B cell (primary cell): ENCODE measurements at regions of chr19 and their contacts with region 1.

Region 1: DNA sequence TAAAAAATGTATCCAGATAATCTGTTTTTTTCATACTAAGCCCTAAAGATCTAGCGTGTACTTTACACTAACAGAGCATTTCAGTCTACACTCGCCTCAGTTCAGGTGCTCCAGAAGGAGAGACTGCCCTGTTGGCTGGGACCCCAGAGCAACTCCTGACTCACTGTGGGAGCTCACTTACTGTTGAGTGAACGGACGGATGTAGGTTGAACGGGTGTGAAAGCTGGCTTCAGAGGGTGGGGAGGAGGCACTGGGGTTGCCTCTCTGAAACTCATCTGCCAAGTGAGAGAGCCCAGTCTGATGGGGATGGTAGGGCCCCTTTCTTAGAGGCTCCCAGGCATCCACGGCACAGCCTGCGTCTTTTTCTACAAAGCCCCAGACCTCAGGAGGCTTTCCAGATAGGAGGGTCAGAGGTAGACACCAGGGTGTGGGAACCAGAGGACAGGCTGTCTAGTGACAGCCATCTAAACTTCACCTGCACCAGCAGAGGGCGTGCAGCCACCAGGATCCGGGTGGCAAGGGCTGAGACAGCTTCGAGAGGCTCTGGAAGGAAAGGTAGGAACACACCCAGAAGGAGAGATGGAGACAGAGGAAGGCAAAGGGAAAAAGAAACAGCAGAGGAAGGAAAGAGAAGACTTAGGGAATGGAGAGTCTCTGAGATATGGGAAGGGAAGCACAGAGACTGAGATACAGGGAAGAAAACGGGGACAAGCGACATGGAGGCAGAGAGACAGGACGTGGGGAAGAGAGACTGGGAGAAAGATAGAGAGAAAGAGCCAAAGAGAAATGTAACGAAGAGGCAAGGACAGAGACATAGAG is 3.7 kb downstream of the KASH5 start:
- DNase-seq: peak; percentile 86
- ATAC-seq: peak; percentile 59
- H3K4me3 ChIP-seq: no peak overlapping the region
- H3K4me3 Mint-ChIP-seq: peak overlapping the region; percentile 44
- H3K27ac ChIP-seq: peak overlapping the region; percentile 61 to 65
- H3K27ac Mint-ChIP-seq: peak overlapping the region; percentile 79
- H3K4me1 ChIP-seq: peaks cover 21 to 46% of the 10 kb centered on the region in 2 donors
- H3K4me1 Mint-ChIP-seq: peaks cover 41% of the 10 kb centered on the region
- H3K27me3 ChIP-seq: no peaks in the 10 kb centered on the region
- H3K27me3 Mint-ChIP-seq: no peaks in the 10 kb centered on the region
- CTCF ChIP-seq: peak; percentile 87

Region 2: GRCh38 chr19:48780631-48781391 is 611.0 kb before region 1 on chr19:
- CTCF ChIA-PET with region 1: no interaction called
- POLR2A ChIA-PET with region 1: no interaction called
- intact Hi-C with region 1: no loop called
- DNase-seq: no peak
- ATAC-seq: no peak
- H3K4me3 ChIP-seq: no peak overlapping the region
- H3K4me3 Mint-ChIP-seq: no peak overlapping the region
- H3K27ac ChIP-seq: no peak overlapping the region
- H3K27ac Mint-ChIP-seq: peak overlapping the region; percentile 5
- H3K4me1 ChIP-seq: peaks cover 3 to 15% of the 10 kb centered on the region in 2 donors
- H3K4me1 Mint-ChIP-seq: peaks cover 19% of the 10 kb centered on the region
- H3K27me3 ChIP-seq: no peaks in the 10 kb centered on the region
- H3K27me3 Mint-ChIP-seq: no peaks in the 10 kb centered on the region
- CTCF ChIP-seq: no peak

Region 3: GRCh38 chr19:49301165-49301865 is 90.5 kb before region 1 on chr19:
- CTCF ChIA-PET with region 1: interaction called, 21 read pairs
- POLR2A ChIA-PET with region 1: no interaction called
- intact Hi-C with region 1: loop called (anchors 2 kb)
- DNase-seq: peak; percentile 89
- ATAC-seq: peak; percentile 98
- H3K4me3 ChIP-seq: peak overlapping the region in 4 of 5 experiments; percentile 11 to 51 (median 37)
- H3K4me3 Mint-ChIP-seq: peak overlapping the region; percentile 66
- H3K27ac ChIP-seq: no peak overlapping the region
- H3K27ac Mint-ChIP-seq: peak overlapping the region; percentile 20
- H3K4me1 ChIP-seq: peaks cover 10 to 14% of the 10 kb centered on the region in 2 donors
- H3K4me1 Mint-ChIP-seq: peaks cover 24% of the 10 kb centered on the region
- H3K27me3 ChIP-seq: no peaks in the 10 kb centered on the region
- H3K27me3 Mint-ChIP-seq: no peaks in the 10 kb centered on the region
- CTCF ChIP-seq: peak; percentile 90

Region 4: GRCh38 chr19:49331616-49332055 is 60.2 kb before region 1 on chr19:
- CTCF ChIA-PET with region 1: interaction called, 23 read pairs
- POLR2A ChIA-PET with region 1: interaction called, 18 read pairs
- intact Hi-C with region 1: loop called (anchors 2 kb)
- DNase-seq: peak; percentile 83
- ATAC-seq: peak; percentile 29
- H3K4me3 ChIP-seq: peak overlapping the region in 1 of 5 experiments; percentile 35
- H3K4me3 Mint-ChIP-seq: peak overlapping the region; percentile 65
- H3K27ac ChIP-seq: peak overlapping the region; percentile 93 to 98
- H3K27ac Mint-ChIP-seq: peak overlapping the region; percentile 99
- H3K4me1 ChIP-seq: peaks cover 79 to 89% of the 10 kb centered on the region in 2 donors
- H3K4me1 Mint-ChIP-seq: peaks cover 82% of the 10 kb centered on the region
- H3K27me3 ChIP-seq: no peaks in the 10 kb centered on the region
- H3K27me3 Mint-ChIP-seq: no peaks in the 10 kb centered on the region
- CTCF ChIP-seq: no peak

Region 5: GRCh38 chr19:49409441-49410029 is 17.7 kb after region 1 on chr19:
- CTCF ChIA-PET with region 1: interaction called, 25 read pairs
- POLR2A ChIA-PET with region 1: no interaction called
- intact Hi-C with region 1: no loop called
- DNase-seq: peak; percentile 71
- ATAC-seq: peak; percentile 85
- H3K4me3 ChIP-seq: peak overlapping the region in 1 of 5 experiments; percentile 45
- H3K4me3 Mint-ChIP-seq: peak overlapping the region; percentile 52
- H3K27ac ChIP-seq: peak overlapping the region; percentile 50 to 55
- H3K27ac Mint-ChIP-seq: peak overlapping the region; percentile 60
- H3K4me1 ChIP-seq: peaks cover 34 to 46% of the 10 kb centered on the region in 2 donors
- H3K4me1 Mint-ChIP-seq: peaks cover 46% of the 10 kb centered on the region
- H3K27me3 ChIP-seq: no peaks in the 10 kb centered on the region
- H3K27me3 Mint-ChIP-seq: no peaks in the 10 kb centered on the region
- CTCF ChIP-seq: no peak

Region 6: GRCh38 chr19:49443366-49444099 is 51.7 kb after region 1 on chr19:
- CTCF ChIA-PET with region 1: interaction called, 28 read pairs
- POLR2A ChIA-PET with region 1: interaction called, 5 read pairs
- intact Hi-C with region 1: loop called (anchors 1 kb)
- DNase-seq: peak; percentile 98
- ATAC-seq: peak; percentile 85
- H3K4me3 ChIP-seq: peak overlapping the region; percentile 12 to 80 (median 71)
- H3K4me3 Mint-ChIP-seq: peak overlapping the region; percentile 93
- H3K27ac ChIP-seq: peak overlapping the region; percentile 65 to 72
- H3K27ac Mint-ChIP-seq: peak overlapping the region; percentile 95
- H3K4me1 ChIP-seq: peaks cover 18 to 31% of the 10 kb centered on the region in 2 donors
- H3K4me1 Mint-ChIP-seq: peaks cover 35% of the 10 kb centered on the region
- H3K27me3 ChIP-seq: peaks cover 2 to 39% (median 34%) of the 10 kb centered on the region in 4 experiments
- H3K27me3 Mint-ChIP-seq: peaks cover 37% of the 10 kb centered on the region
- CTCF ChIP-seq: peak; percentile 89

Region 7: DNA sequence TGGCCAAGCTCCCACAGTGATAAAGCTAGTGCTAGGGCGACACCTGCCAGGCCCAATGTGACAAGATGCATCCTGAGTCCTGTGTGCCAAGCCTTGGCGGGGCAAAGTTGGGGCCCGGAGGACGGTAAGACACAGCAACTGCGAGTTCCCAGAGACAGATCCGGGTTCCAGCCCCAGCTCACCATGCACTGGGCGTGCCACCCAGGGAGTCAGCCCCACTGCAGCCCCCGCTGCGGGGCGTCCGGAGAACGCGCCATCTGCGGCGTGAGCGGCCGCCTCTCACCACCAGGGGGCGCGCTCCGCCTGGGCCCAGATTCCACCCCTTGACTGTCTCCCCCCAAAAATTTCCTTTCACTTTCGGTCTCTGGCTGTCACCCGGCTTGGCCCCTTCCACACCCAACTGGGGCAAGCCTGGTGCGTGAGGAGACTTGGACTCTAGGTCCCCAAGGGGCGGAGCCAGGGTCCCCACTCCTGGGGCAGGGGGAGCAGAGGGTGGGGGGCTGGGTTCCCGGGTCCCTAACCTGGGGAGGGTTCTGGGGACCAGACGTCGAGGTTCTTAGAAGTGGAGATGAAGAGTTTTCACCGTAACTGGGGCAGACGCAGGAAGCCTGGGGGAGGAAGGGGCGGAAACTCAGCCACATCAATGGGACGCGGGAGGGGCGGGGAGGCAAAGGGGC is 82.2 kb after region 1 on chr19 and contains the start of gene FLT3LG:
- CTCF ChIA-PET with region 1: interaction called, 54 read pairs
- POLR2A ChIA-PET with region 1: interaction called, 18 read pairs
- intact Hi-C with region 1: loop called (anchors 1 kb)
- DNase-seq: peak; percentile 94
- ATAC-seq: peak; percentile 52
- H3K4me3 ChIP-seq: peak within 1 kb of the TSS in 4 of 5 experiments; percentile 53 to 98 (median 70)
- H3K4me3 Mint-ChIP-seq: peak within 1 kb of the TSS; percentile 93
- H3K27ac ChIP-seq: peak within 1 kb of the TSS; percentile 75 to 81
- H3K27ac Mint-ChIP-seq: peak within 1 kb of the TSS; percentile 97
- H3K4me1 ChIP-seq: peaks cover 43 to 73% of the 10 kb centered on the region in 2 donors
- H3K4me1 Mint-ChIP-seq: peaks cover 57% of the 10 kb centered on the region
- H3K27me3 ChIP-seq: no peaks in the 10 kb centered on the region
- H3K27me3 Mint-ChIP-seq: no peaks in the 10 kb centered on the region
- CTCF ChIP-seq: peak; percentile 89
- total RNA-seq, gene FLT3LG: 27.8 and 31.0 TPM in 2 replicates